ENCODE measurements at regions of chr20 and their contacts with region 1.

Region 1: GRCh38 chr20:59850018-59850641 is 83.3 kb downstream of the SYCP2 start:
- DNase-seq: no peak
- H3K4me3 Mint-ChIP-seq: no peak overlapping the region
- H3K27ac Mint-ChIP-seq: no peak overlapping the region
- H3K4me1 Mint-ChIP-seq: peaks cover 22% of the 10 kb centered on the region
- H3K27me3 Mint-ChIP-seq: no peaks in the 10 kb centered on the region
- CTCF ChIP-seq: peak; percentile 68

Region 2: GRCh38 chr20:59598625-59599310 is 251.4 kb before region 1 on chr20:
- CTCF ChIA-PET with region 1: no interaction called
- intact Hi-C with region 1: loop called (anchors 5 kb)
- DNase-seq: peak; percentile 77
- H3K4me3 Mint-ChIP-seq: no peak overlapping the region
- H3K27ac Mint-ChIP-seq: no peak overlapping the region
- H3K4me1 Mint-ChIP-seq: no peaks in the 10 kb centered on the region
- H3K27me3 Mint-ChIP-seq: no peaks in the 10 kb centered on the region
- CTCF ChIP-seq: peak; percentile 98

Region 3: GRCh38 chr20:59782986-59783640 is 67.0 kb before region 1 on chr20:
- CTCF ChIA-PET with region 1: interaction called, 93 read pairs
- intact Hi-C with region 1: loop called (anchors 1 kb)
- DNase-seq: peak; percentile 88
- H3K4me3 Mint-ChIP-seq: no peak overlapping the region
- H3K27ac Mint-ChIP-seq: no peak overlapping the region
- H3K4me1 Mint-ChIP-seq: no peaks in the 10 kb centered on the region
- H3K27me3 Mint-ChIP-seq: peaks cover 3% of the 10 kb centered on the region
- CTCF ChIP-seq: peak; percentile 99

Region 4: GRCh38 chr20:59835448-59836395 is 14.4 kb before region 1 on chr20:
- CTCF ChIA-PET with region 1: interaction called, 18 read pairs
- intact Hi-C with region 1: no loop called
- DNase-seq: peak; percentile 61
- H3K4me3 Mint-ChIP-seq: peak overlapping the region; percentile 65
- H3K27ac Mint-ChIP-seq: peak overlapping the region; percentile 61
- H3K4me1 Mint-ChIP-seq: peaks cover 73% of the 10 kb centered on the region
- H3K27me3 Mint-ChIP-seq: no peaks in the 10 kb centered on the region
- CTCF ChIP-seq: no peak

Region 5: DNA sequence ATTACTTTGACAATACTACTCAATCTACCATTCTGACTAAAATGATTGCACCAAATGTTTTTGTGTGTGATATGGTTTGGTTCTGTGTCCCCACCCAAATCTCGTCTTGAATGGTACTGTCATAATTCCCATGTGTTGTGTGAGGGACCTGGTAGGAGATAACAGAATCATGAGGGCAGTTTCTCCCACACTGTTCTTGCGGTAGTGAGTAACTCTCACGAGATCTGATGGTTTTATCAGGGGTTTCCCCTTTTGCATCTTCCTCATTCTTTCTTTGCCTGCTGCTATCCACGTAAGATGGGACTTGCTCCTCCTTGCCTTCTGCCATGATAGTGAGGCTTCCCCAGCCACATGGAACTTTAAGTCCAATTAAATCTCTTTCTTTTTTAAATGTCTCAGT is 62.5 kb after region 1 on chr20:
- CTCF ChIA-PET with region 1: no interaction called
- intact Hi-C with region 1: no loop called
- DNase-seq: no peak
- H3K4me3 Mint-ChIP-seq: no peak overlapping the region
- H3K27ac Mint-ChIP-seq: no peak overlapping the region
- H3K4me1 Mint-ChIP-seq: no peaks in the 10 kb centered on the region
- H3K27me3 Mint-ChIP-seq: no peaks in the 10 kb centered on the region
- CTCF ChIP-seq: no peak

Measured in Calu3 (cell line).